A673 (cell line): ENCODE measurements at regions of chr3 and their contacts with region 1.

Region 1: DNA sequence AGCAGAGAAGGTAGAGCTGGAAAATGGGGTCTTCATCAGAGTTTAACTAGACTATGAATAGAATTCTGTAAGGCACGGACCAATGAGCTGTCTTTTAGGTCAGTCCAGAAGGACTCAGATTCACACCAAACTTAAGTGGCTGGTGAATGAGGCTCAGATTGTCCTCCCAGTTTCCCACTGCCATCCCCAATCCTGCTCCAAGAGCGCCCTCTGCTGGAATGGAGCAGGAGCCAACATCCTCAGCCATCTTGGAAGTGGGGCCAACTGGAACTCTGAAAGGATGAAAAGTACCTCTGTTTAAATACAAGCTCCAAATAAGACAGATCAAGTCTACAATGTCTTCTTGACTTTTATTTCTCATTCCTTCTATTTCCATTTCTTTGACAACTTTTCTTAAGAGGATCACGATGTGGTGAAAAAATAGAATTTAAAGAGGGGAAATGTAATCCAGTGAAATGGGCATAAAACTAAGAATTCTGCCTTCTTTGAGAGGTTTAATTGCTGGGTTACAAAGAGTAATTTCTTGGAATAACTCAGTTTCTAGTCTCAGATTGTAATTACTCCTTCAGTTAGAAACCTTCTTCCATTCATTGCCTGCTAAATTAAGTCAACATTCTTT is 217.1 kb upstream of the TPRG1 start:
- DNase-seq: peak; percentile 92
- H3K4me3 ChIP-seq: no peak overlapping the region
- H3K27ac ChIP-seq: no peak overlapping the region
- H3K4me1 ChIP-seq: peaks cover 6% of the 10 kb centered on the region
- H3K27me3 ChIP-seq: no peaks in the 10 kb centered on the region
- CTCF ChIP-seq: peak; percentile 97

Region 2: DNA sequence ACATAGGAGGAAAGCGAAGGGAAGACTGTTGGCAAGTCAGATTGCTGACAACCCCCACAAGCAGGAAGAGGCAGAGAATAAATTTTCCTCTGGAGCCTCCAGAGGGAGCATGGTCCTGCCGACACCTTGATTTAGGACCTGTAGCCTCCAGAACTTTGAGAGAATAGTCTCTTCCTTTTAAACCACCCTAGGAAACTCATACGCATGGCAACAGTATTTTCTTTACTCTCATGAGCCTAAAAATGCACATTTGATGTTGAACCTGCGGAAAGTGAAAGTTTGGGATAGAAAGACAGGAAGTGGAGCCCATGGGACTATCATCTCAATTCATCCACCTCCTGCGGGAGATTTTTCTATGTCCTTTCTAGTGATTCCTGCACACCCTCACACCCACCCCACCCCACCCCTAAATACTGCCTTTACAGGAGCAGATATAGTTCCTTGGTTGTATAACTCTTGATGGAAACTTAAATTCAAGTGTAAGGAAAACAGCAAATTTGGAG is 917.4 kb before region 1 on chr3:
- CTCF ChIA-PET with region 1: no interaction called
- POLR2A ChIA-PET with region 1: no interaction called
- intact Hi-C with region 1: loop called (anchors 10 kb)
- DNase-seq: peak; percentile 67
- H3K4me3 ChIP-seq: no peak overlapping the region
- H3K27ac ChIP-seq: no peak overlapping the region
- H3K4me1 ChIP-seq: no peaks in the 10 kb centered on the region
- H3K27me3 ChIP-seq: no peaks in the 10 kb centered on the region
- CTCF ChIP-seq: peak; percentile 54

Region 3: DNA sequence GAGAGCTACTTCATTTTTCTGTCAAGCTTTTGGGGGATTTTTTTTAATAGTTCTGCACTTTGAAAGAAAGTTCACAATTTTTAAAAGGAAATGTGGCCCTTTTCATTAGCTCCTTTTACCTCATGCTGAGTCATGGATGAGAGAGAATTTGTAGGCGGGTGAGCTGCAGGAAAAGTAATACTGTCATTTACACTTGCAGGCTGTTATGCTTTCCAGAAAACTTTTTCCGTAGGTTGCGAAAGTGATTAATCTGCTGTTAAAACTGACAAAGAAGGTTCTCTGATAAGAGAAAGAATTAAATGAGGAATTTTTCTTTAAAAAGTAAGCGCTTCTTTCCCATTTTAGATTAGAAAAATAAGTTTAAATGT is 370.6 kb before region 1 on chr3:
- CTCF ChIA-PET with region 1: no interaction called
- POLR2A ChIA-PET with region 1: no interaction called
- intact Hi-C with region 1: loop called (anchors 5 kb)
- DNase-seq: peak; percentile 66
- H3K4me3 ChIP-seq: peak overlapping the region; percentile 19
- H3K27ac ChIP-seq: peak overlapping the region; percentile 9
- H3K4me1 ChIP-seq: peaks cover 22% of the 10 kb centered on the region
- H3K27me3 ChIP-seq: no peaks in the 10 kb centered on the region
- CTCF ChIP-seq: no peak

Region 4: DNA sequence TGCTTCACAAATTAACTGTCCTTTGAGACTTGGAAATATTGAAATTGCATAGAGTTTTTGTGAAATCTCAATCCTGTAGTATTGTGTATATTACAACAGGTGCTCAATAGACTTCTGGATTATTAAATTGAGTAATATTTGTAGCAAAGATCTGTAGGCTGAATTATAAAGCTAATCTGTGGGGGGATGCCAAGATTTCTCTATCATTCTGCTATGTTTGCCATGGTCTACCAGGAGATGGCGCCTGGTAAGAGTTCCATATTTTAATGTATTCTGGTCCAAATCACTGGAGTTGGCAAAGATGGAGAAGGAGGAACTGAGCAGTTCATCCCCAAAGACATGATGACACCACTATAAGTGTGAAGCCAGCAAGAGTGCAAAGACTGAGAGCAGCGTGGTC is 123.8 kb before region 1 on chr3:
- CTCF ChIA-PET with region 1: interaction called, 5 read pairs
- POLR2A ChIA-PET with region 1: no interaction called
- intact Hi-C with region 1: loop called (anchors 5 kb)
- DNase-seq: peak; percentile 48
- H3K4me3 ChIP-seq: no peak overlapping the region
- H3K27ac ChIP-seq: no peak overlapping the region
- H3K4me1 ChIP-seq: no peaks in the 10 kb centered on the region
- H3K27me3 ChIP-seq: no peaks in the 10 kb centered on the region
- CTCF ChIP-seq: peak; percentile 70

Region 5: DNA sequence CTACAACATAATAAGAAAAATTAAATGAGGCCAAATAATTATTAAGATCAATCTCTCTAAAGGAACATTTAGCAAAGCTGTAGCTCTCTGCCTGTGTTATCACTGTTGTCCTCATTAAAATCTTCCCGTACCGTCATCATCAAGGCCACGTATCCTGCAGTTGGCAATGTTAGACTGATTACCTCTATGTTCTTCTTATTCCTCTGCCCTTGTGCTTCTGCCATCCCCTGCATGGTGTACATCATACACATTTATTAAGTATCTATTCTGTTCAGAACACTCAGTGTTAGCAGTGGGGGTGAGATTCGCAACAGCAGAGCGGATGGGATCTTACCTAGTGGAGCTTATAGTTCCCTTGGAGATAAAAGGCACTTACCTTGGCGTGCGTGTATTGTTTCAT is 229.9 kb after region 1 on chr3:
- CTCF ChIA-PET with region 1: no interaction called
- POLR2A ChIA-PET with region 1: no interaction called
- intact Hi-C with region 1: no loop called
- DNase-seq: no peak
- H3K4me3 ChIP-seq: no peak overlapping the region
- H3K27ac ChIP-seq: no peak overlapping the region
- H3K4me1 ChIP-seq: no peaks in the 10 kb centered on the region
- H3K27me3 ChIP-seq: no peaks in the 10 kb centered on the region
- CTCF ChIP-seq: no peak

Region 6: DNA sequence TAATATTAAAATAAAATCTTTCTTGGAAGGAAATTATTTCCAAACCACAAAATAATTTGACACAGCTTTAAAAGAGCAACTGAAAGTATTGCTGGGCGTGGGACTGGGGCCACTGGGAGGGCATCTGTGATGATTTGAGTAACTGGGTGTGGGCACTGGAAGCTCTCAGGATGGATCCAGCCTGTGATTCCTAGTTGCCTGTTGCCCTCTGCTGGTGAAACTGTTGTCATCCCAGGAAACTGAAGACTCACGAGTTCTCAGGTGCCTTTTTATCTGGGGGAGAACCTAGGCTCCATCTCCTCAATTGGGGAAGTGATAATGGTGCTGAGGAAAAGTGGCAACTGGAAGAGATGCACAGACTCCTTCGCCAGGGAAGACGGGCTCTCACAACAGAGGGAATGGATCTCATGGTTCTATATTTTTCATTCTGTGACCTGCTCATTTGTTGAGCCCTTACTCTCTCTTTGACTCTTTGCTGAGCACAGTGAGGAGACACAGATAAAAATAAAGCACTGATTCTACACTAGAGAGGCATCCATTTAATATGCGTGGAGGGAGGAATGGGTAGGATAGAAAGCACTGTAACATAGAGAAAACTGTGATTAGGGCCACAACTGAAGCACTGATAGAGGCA is 278.6 kb after region 1 on chr3:
- CTCF ChIA-PET with region 1: no interaction called
- POLR2A ChIA-PET with region 1: no interaction called
- intact Hi-C with region 1: loop called (anchors 10 kb)
- DNase-seq: peak; percentile 83
- H3K4me3 ChIP-seq: no peak overlapping the region
- H3K27ac ChIP-seq: no peak overlapping the region
- H3K4me1 ChIP-seq: peaks cover 6% of the 10 kb centered on the region
- H3K27me3 ChIP-seq: no peaks in the 10 kb centered on the region
- CTCF ChIP-seq: peak; percentile 80

Region 7: DNA sequence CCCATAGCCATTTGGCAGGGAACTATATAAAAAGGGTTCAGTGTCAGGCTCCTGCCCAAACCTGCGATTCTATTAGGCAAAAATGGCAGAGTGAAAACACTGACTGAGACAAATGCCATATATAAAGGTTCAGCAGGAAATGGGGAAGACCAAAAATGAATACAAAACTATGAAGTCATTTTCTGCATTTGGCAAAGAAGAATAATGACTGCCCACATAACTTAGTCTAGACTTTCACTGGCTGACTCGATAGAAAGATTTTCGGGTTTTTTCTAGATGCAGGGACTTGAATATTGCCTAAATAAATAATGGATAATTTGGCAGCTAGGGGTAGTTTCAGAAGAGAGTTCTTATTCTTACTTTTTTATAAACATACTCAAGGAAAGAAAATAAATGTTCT is 395.1 kb after region 1 on chr3:
- CTCF ChIA-PET with region 1: no interaction called
- POLR2A ChIA-PET with region 1: no interaction called
- intact Hi-C with region 1: no loop called
- DNase-seq: no peak
- H3K4me3 ChIP-seq: no peak overlapping the region
- H3K27ac ChIP-seq: no peak overlapping the region
- H3K4me1 ChIP-seq: peaks cover 8% of the 10 kb centered on the region
- H3K27me3 ChIP-seq: no peaks in the 10 kb centered on the region
- CTCF ChIP-seq: no peak